ENCODE measurements at regions of chr3 and their contacts with region 1.

Region 1: GRCh38 chr3:122679085-122679881 is 1.4 kb upstream of the PARP14 start:
- DNase-seq: no peak
- ATAC-seq: peak; percentile 70
- H3K4me3 ChIP-seq: peak overlapping the region; percentile 97
- H3K27ac ChIP-seq: peak overlapping the region; percentile 97
- H3K4me1 ChIP-seq: peaks cover 16% of the 10 kb centered on the region
- H3K27me3 ChIP-seq: no peaks in the 10 kb centered on the region
- CTCF ChIP-seq: peak; percentile 75 to 91 (median 80)
- EP300 ChIP-seq: peak in 1 of 2 experiments; percentile 6; a peak in 1 of 4 replicates
- POLR2A ChIP-seq: no peak
- RAD21 ChIP-seq: peak; percentile 95

Region 2: GRCh38 chr3:121654493-121655385 is 1024.5 kb before region 1 on chr3:
- CTCF ChIA-PET with region 1: no interaction called
- POLR2A ChIA-PET with region 1: no interaction called
- RAD21 ChIA-PET with region 1: no interaction called
- SMC1A ChIA-PET with region 1: no interaction called
- in situ Hi-C with region 1: loop called (anchors 10 kb)
- intact Hi-C with region 1: no loop called
- DNase-seq: peak; percentile 36
- ATAC-seq: peak; percentile 89
- H3K4me3 ChIP-seq: peak overlapping the region; percentile 12; the same call in 1 of the 2 replicates
- H3K27ac ChIP-seq: peak overlapping the region; percentile 68; the same call in 1 of the 2 replicates
- H3K4me1 ChIP-seq: peaks cover 34% of the 10 kb centered on the region
- H3K27me3 ChIP-seq: no peaks in the 10 kb centered on the region
- CTCF ChIP-seq: no peak
- EP300 ChIP-seq: 0 out of 4 replicates have a peak, but pooled peaks have one; percentile 16 to 21
- POLR2A ChIP-seq: no peak
- RAD21 ChIP-seq: no peak

Region 3: GRCh38 chr3:122415720-122416654 is 263.3 kb before region 1 on chr3 and contains the start of gene WDR5B:
- CTCF ChIA-PET with region 1: no interaction called
- POLR2A ChIA-PET with region 1: interaction called, 3 read pairs
- RAD21 ChIA-PET with region 1: interaction called, 4 read pairs
- SMC1A ChIA-PET with region 1: interaction called, 10 read pairs
- in situ Hi-C with region 1: no loop called
- intact Hi-C with region 1: no loop called
- DNase-seq: peak; percentile 98
- ATAC-seq: peak; percentile 95
- H3K4me3 ChIP-seq: peak within 1 kb of the TSS; percentile 77
- H3K27ac ChIP-seq: peak within 1 kb of the TSS; percentile 91
- H3K4me1 ChIP-seq: peaks cover 14% of the 10 kb centered on the region; the same call in 1 of the 2 replicates
- H3K27me3 ChIP-seq: no peaks in the 10 kb centered on the region
- CTCF ChIP-seq: no peak; a peak in 1 of 6 replicates
- EP300 ChIP-seq: peak; percentile 33 to 43; a peak in 1 of 4 replicates
- POLR2A ChIP-seq: peak; percentile 93
- RAD21 ChIP-seq: no peak
- polyA plus RNA-seq, gene WDR5B: 1.7 to 2.4 TPM

Region 4: GRCh38 chr3:122548076-122548475 is 131.2 kb before region 1 on chr3:
- CTCF ChIA-PET with region 1: interaction called, 33 read pairs
- POLR2A ChIA-PET with region 1: no interaction called
- RAD21 ChIA-PET with region 1: no interaction called
- SMC1A ChIA-PET with region 1: interaction called, 250 read pairs
- in situ Hi-C with region 1: no loop called
- intact Hi-C with region 1: no loop called
- DNase-seq: no peak
- ATAC-seq: no peak
- H3K4me3 ChIP-seq: no peak overlapping the region
- H3K27ac ChIP-seq: no peak overlapping the region
- H3K4me1 ChIP-seq: no peaks in the 10 kb centered on the region
- H3K27me3 ChIP-seq: no peaks in the 10 kb centered on the region
- CTCF ChIP-seq: no peak
- EP300 ChIP-seq: no peak
- POLR2A ChIP-seq: no peak
- RAD21 ChIP-seq: no peak

Region 5: GRCh38 chr3:122572940-122573412 is 106.3 kb before region 1 on chr3:
- CTCF ChIA-PET with region 1: interaction called, 79 read pairs
- POLR2A ChIA-PET with region 1: interaction called, 31 read pairs
- RAD21 ChIA-PET with region 1: interaction called, 236 read pairs
- SMC1A ChIA-PET with region 1: interaction called, 61 read pairs
- in situ Hi-C with region 1: no loop called
- intact Hi-C with region 1: loop called (anchors 1 kb)
- DNase-seq: peak; percentile 77
- ATAC-seq: peak; percentile 47
- H3K4me3 ChIP-seq: no peak overlapping the region
- H3K27ac ChIP-seq: peak overlapping the region; percentile 59
- H3K4me1 ChIP-seq: peaks cover 29% of the 10 kb centered on the region
- H3K27me3 ChIP-seq: no peaks in the 10 kb centered on the region
- CTCF ChIP-seq: no peak
- EP300 ChIP-seq: peak; percentile 61 to 68; a peak in 2 of 4 replicates
- POLR2A ChIP-seq: no peak
- RAD21 ChIP-seq: no peak

Region 6: DNA sequence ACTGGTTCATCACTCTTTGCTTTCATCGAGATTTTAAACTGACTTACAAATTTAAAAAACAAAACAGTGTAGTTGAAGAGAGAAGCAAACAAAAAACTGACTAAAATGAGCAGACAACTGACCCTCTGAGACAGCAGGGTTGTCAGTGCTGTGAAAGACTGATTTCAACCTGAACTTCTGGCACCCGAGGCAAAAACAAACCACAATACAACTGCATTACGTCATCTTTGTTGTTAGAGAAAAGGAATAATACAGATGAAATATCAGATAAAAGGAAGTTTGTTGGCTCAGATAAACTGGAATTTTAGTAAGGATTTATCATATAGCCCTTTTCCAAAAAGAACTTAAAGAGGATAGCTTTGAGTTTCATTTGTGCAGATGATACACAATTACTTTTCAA is 50.7 kb before region 1 on chr3:
- CTCF ChIA-PET with region 1: interaction called, 26 read pairs
- POLR2A ChIA-PET with region 1: interaction called, 5 read pairs
- RAD21 ChIA-PET with region 1: interaction called, 44 read pairs
- SMC1A ChIA-PET with region 1: interaction called, 57 read pairs
- in situ Hi-C with region 1: no loop called
- intact Hi-C with region 1: no loop called
- DNase-seq: no peak
- ATAC-seq: no peak
- H3K4me3 ChIP-seq: no peak overlapping the region
- H3K27ac ChIP-seq: no peak overlapping the region
- H3K4me1 ChIP-seq: peaks cover 14% of the 10 kb centered on the region
- H3K27me3 ChIP-seq: no peaks in the 10 kb centered on the region
- CTCF ChIP-seq: no peak
- EP300 ChIP-seq: no peak
- POLR2A ChIP-seq: no peak
- RAD21 ChIP-seq: no peak

Region 7: DNA sequence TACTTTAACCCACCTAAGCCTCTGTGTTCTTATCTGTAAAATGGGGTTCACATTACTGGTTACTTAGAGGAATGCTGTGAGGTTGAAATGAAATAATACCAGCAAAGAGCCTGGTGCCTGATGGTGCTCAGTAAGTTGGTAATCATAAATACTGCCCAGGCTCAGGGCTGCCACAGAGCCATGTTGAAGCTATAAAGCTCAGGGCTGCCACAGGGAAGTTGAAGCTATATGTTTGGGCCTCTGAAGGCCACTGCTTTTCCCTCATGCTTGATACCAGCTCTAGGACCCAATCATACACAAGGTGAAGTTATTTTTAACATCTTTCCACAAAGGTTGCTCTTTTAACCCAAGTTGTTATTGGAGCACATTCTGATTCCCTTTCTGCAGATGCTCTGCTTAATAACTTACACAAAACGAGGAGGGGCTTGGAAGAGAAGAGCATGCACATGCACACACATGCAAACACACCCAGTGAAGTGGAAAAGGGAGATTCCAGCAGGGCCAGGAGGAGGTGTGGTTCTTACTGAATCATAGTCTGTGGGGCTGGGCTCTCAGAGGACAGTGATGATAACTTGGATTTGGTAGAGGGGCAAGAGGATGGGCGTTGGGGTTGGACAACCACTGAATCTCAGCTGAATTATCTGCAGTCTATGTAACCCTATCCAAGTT is 18.8 kb after region 1 on chr3:
- CTCF ChIA-PET with region 1: interaction called, 11 read pairs
- POLR2A ChIA-PET with region 1: interaction called, 12 read pairs
- RAD21 ChIA-PET with region 1: interaction called, 30 read pairs
- SMC1A ChIA-PET with region 1: interaction called, 91 read pairs
- in situ Hi-C with region 1: no loop called
- intact Hi-C with region 1: no loop called
- DNase-seq: peak; percentile 61
- ATAC-seq: peak; percentile 96
- H3K4me3 ChIP-seq: peak overlapping the region; percentile 7; the same call in 1 of the 2 replicates
- H3K27ac ChIP-seq: peak overlapping the region; percentile 65
- H3K4me1 ChIP-seq: peaks cover 25% of the 10 kb centered on the region
- H3K27me3 ChIP-seq: no peaks in the 10 kb centered on the region
- CTCF ChIP-seq: no peak
- EP300 ChIP-seq: no peak
- POLR2A ChIP-seq: no peak
- RAD21 ChIP-seq: no peak

Region 8: GRCh38 chr3:122810734-122811133 is 131.5 kb after region 1 on chr3:
- CTCF ChIA-PET with region 1: no interaction called
- POLR2A ChIA-PET with region 1: no interaction called
- RAD21 ChIA-PET with region 1: no interaction called
- SMC1A ChIA-PET with region 1: no interaction called
- in situ Hi-C with region 1: no loop called
- intact Hi-C with region 1: no loop called
- DNase-seq: no peak
- ATAC-seq: no peak
- H3K4me3 ChIP-seq: no peak overlapping the region
- H3K27ac ChIP-seq: no peak overlapping the region
- H3K4me1 ChIP-seq: no peaks in the 10 kb centered on the region
- H3K27me3 ChIP-seq: no peaks in the 10 kb centered on the region
- CTCF ChIP-seq: no peak
- EP300 ChIP-seq: no peak
- POLR2A ChIP-seq: no peak
- RAD21 ChIP-seq: no peak

Region 9: DNA sequence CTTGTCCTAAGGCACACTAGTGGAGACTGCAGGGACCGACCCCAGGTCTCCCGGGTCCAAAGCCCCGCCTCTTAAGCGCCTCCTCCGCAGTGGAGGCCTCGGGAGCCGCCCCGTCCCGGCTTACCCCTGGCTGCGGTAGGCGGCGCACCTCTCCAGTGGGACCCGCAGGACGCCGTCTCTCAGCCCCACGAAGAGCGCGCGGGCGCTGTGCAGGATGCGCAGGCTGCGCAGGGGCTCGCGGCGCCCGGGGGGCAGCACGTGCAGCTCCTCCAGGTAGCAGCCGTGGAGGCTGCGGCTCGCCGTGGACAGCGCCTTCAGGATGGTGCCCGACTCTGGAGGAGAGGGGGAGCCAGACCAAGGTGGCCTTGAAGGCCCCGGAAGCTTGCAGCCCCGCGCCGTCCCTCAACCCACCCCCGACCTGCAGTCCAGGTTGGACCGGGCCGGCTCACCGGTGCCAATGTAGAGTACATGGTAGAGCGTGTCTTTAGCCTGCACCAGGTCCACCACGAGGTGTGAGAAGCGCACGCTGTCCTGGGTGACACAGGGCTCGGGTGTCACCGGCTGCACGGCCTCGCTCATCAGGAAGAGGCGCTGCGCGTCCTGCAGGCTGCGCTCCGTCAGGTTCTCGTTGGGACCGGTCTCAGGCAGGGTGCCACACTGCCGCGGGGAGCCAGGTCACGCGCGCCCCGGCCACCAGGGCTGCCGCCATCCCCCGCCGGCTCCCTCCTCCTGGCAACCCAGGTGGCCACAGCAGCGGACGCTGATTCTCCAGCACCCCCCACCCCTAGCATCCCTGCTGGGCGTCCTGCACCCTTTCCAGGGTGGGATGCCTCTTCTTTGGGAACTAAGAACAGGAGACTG is 242.7 kb after region 1 on chr3:
- CTCF ChIA-PET with region 1: no interaction called
- POLR2A ChIA-PET with region 1: no interaction called
- RAD21 ChIA-PET with region 1: no interaction called
- SMC1A ChIA-PET with region 1: no interaction called
- in situ Hi-C with region 1: no loop called
- intact Hi-C with region 1: no loop called
- DNase-seq: no peak
- ATAC-seq: peak; percentile 64
- H3K4me3 ChIP-seq: no peak overlapping the region
- H3K27ac ChIP-seq: no peak overlapping the region
- H3K4me1 ChIP-seq: no peaks in the 10 kb centered on the region; the same call in 1 of the 2 replicates
- H3K27me3 ChIP-seq: peaks cover 5 to 6% of the 10 kb centered on the region in 2 experiments; a peak in 3 of 4 replicates
- CTCF ChIP-seq: 0 out of 6 replicates have a peak, but pooled peaks of 1 of the 3 experiments have one; percentile 16
- EP300 ChIP-seq: no peak
- POLR2A ChIP-seq: no peak
- RAD21 ChIP-seq: no peak

Region 10: GRCh38 chr3:123015557-123015956 is 336.3 kb after region 1 on chr3:
- CTCF ChIA-PET with region 1: no interaction called
- POLR2A ChIA-PET with region 1: no interaction called
- RAD21 ChIA-PET with region 1: no interaction called
- SMC1A ChIA-PET with region 1: no interaction called
- in situ Hi-C with region 1: no loop called
- intact Hi-C with region 1: no loop called
- DNase-seq: no peak
- ATAC-seq: no peak
- H3K4me3 ChIP-seq: no peak overlapping the region
- H3K27ac ChIP-seq: no peak overlapping the region
- H3K4me1 ChIP-seq: no peaks in the 10 kb centered on the region
- H3K27me3 ChIP-seq: peaks cover 3 to 7% of the 10 kb centered on the region in 2 experiments; a peak in 3 of 4 replicates
- CTCF ChIP-seq: peak in 1 of 3 experiments; percentile 22; a peak in 1 of 6 replicates
- EP300 ChIP-seq: no peak
- POLR2A ChIP-seq: no peak
- RAD21 ChIP-seq: 0 out of 2 replicates have a peak, but pooled peaks have one; percentile 12

Measured in GM12878 (cell line).